Tibial artery (tissue), 4 donors: ENCODE measurements at regions of chr15 and their contacts with region 1.

Region 1: GRCh38 chr15:96345560-96346399 is 15.3 kb downstream of the NR2F2 start:
- DNase-seq: peak; percentile 91 to 96
- H3K4me3 ChIP-seq: peak overlapping the region; percentile 92 to 97
- H3K27ac ChIP-seq: peak overlapping the region; percentile 97 to 99
- H3K4me1 ChIP-seq: peaks cover 0 to 70% (median 22%) of the 10 kb centered on the region in 4 donors
- H3K27me3 ChIP-seq: no peaks in the 10 kb centered on the region
- CTCF ChIP-seq: peak; percentile 71 to 74

Region 2: GRCh38 chr15:95025924-95026728 is 1319.7 kb before region 1 on chr15:
- intact Hi-C with region 1: loop called (anchors 10 kb)
- DNase-seq: peak in 1 of 2 donors; percentile 58
- H3K4me3 ChIP-seq: no peak overlapping the region
- H3K27ac ChIP-seq: no peak overlapping the region
- H3K4me1 ChIP-seq: peaks cover 0 to 7% (median 2%) of the 10 kb centered on the region in 4 donors
- H3K27me3 ChIP-seq: no peaks in the 10 kb centered on the region
- CTCF ChIP-seq: peak; percentile 54 to 58

Region 3: DNA sequence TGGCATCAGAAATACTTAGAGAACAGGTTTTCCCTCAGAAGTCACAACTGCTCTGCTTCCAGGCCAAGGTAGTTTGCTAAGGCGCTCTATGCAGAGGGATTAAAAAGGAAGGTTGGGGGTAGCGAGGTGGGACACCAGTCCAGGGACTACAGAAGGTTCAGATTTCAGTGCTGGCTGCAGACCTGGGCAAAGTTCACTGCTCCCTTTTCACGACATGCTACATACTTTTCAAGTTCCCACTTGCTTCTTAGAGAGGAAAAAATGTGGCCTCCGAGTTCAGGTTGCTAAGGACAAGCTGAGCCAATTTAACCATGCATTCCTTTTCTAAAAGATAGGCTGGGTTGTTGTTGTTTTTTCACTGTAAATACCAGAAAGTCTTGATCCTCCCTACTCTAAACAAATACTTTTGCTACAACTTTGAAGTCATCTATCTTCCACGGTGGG is 173.9 kb before region 1 on chr15:
- intact Hi-C with region 1: no loop called
- DNase-seq: no peak
- H3K4me3 ChIP-seq: no peak overlapping the region
- H3K27ac ChIP-seq: no peak overlapping the region
- H3K4me1 ChIP-seq: peaks cover 0 to 23% (median 4%) of the 10 kb centered on the region in 4 donors
- H3K27me3 ChIP-seq: no peaks in the 10 kb centered on the region
- CTCF ChIP-seq: no peak

Region 4: GRCh38 chr15:96312639-96313335 is 33.0 kb before region 1 on chr15:
- intact Hi-C with region 1: no loop called
- DNase-seq: no peak
- H3K4me3 ChIP-seq: no peak overlapping the region
- H3K27ac ChIP-seq: peak overlapping the region; percentile 53 to 70
- H3K4me1 ChIP-seq: peaks cover 0 to 77% (median 9%) of the 10 kb centered on the region in 4 donors
- H3K27me3 ChIP-seq: no peaks in the 10 kb centered on the region
- CTCF ChIP-seq: no peak

Region 5: DNA sequence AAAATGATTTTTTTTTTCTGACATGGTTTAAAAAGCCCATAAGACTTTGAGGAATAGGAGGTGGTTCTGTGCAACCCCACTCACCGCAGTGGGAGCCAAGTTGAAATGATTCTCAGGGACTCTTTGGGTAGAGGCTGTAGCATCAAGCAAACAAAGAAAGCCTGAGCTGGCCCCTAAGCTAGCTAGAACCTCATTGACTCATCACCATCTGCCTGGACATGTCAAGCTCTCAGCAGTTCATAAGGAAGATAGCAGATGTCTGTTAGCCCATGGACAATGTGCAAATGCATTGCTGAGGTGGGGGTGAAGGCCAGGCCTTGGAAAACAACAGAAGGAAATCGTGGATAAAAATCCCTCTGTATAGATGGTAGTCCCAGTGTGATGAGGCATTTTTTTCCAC is 219.5 kb after region 1 on chr15:
- intact Hi-C with region 1: no loop called
- DNase-seq: no peak
- H3K4me3 ChIP-seq: no peak overlapping the region
- H3K27ac ChIP-seq: no peak overlapping the region
- H3K4me1 ChIP-seq: no peaks in the 10 kb centered on the region
- H3K27me3 ChIP-seq: no peaks in the 10 kb centered on the region
- CTCF ChIP-seq: no peak